Left ventricle myocardium inferior (tissue), 1 donor: ENCODE measurements at regions of chr6 and their contacts with region 1.

Region 1: DNA sequence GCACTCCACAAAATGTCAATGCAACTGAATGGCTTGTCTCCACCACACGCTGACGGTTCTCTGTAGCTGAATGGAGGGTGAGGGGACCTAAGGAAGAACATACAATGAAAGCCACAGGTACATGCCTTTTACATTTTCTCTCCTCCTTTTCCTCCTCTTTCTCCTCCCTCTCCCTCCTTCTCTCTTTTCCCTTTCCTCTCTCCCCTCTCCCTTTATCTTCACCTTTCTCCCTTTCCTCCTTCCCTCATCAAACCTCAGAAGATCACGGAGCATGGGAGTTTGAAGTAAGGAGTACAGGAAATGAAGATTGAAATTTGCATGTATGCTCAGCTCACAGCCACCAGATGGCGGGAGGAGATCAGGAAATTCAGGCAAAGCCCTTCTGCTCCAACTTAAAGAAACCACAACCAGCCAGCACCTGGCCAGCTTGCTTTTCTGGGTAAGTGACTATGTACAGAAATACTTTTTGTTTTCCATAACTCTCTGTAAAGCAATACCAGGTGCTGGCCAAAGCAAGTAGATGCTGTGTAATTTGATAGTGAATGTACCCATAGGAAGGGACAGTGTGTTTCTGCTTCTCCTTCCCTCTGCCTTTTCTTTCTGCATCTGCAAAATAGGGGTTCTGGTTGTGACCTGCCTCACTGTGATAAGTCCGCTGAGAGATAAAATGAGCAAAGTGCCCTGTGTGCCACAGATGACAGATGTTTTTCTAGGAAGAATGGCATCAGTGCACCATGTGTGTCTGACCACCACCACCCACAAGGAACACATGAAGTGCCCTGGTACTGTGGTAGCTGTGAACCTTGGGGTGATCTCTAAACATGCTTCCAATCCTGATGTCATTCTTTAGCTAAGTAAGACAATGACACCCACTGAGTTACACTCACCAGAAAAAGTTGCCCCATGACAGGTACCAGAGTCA is 18.6 kb upstream of the FOXO3 start:
- DNase-seq: peak; percentile 39
- H3K4me3 ChIP-seq: no peak overlapping the region
- H3K27ac ChIP-seq: no peak overlapping the region
- H3K4me1 ChIP-seq: peaks cover 9% of the 10 kb centered on the region
- H3K27me3 ChIP-seq: no peaks in the 10 kb centered on the region
- CTCF ChIP-seq: peak; percentile 87

Region 2: DNA sequence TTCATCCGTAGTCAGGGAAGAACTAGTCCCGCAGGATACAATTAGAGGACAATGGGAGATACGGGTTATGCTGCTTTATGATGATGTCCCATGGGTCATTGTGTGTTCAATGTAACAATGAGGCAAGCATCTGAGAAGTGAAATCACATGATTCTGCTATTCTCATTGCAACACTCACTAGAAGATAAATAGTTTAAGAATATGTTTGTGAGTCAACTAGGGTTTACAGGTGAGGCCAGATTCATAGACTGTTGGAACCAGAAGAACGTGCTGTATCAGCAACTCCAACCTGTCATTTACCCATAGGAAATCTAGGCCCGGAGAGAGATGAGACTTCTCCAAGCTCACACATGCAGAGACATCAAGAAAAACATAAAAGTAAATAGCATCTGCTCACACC is 798.8 kb before region 1 on chr6:
- intact Hi-C with region 1: no loop called
- DNase-seq: no peak
- H3K4me3 ChIP-seq: no peak overlapping the region
- H3K27ac ChIP-seq: no peak overlapping the region
- H3K4me1 ChIP-seq: no peaks in the 10 kb centered on the region
- H3K27me3 ChIP-seq: peaks cover 37% of the 10 kb centered on the region
- CTCF ChIP-seq: no peak

Region 3: DNA sequence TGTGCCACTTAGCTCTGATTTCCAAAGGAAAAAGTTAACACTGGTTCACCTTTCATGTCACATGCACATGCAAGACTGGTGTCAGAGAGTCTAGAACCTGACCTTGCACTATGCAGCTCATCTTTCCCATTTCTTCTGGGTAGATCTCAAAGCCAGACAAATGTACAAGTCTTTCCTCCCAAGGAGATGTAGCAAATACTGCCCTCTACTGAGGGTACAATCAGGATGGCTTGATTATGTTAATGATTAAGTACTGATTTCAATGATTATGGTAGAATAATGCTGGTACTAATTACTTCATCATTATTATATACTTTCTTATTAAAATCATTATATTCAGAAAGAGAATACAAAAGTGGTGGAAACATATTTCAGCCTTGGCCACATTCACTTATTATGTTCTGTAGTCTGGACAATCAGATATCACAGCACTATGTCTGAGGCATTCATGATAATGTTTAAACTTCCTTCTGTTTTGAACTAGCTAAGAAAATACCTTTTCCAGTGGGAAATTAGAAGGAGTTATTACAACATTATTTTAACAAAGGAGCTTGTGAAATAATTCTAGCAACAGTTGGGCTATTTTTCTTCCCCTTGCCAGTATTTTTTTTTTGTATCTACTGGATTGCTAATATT is 49.9 kb before region 1 on chr6:
- intact Hi-C with region 1: no loop called
- DNase-seq: no peak
- H3K4me3 ChIP-seq: no peak overlapping the region
- H3K27ac ChIP-seq: no peak overlapping the region
- H3K4me1 ChIP-seq: no peaks in the 10 kb centered on the region
- H3K27me3 ChIP-seq: no peaks in the 10 kb centered on the region
- CTCF ChIP-seq: peak; percentile 71

Region 4: GRCh38 chr6:108837236-108837971 is 295.3 kb after region 1 on chr6:
- intact Hi-C with region 1: loop called (anchors 2 kb)
- DNase-seq: no peak
- H3K4me3 ChIP-seq: no peak overlapping the region
- H3K27ac ChIP-seq: peak overlapping the region; percentile 1
- H3K4me1 ChIP-seq: peaks cover 9% of the 10 kb centered on the region
- H3K27me3 ChIP-seq: no peaks in the 10 kb centered on the region
- CTCF ChIP-seq: no peak

Region 5: GRCh38 chr6:108896111-108896661 is 354.1 kb after region 1 on chr6:
- intact Hi-C with region 1: loop called (anchors 2 kb)
- DNase-seq: no peak
- H3K4me3 ChIP-seq: no peak overlapping the region
- H3K27ac ChIP-seq: peak overlapping the region; percentile 79
- H3K4me1 ChIP-seq: peaks cover 47% of the 10 kb centered on the region
- H3K27me3 ChIP-seq: no peaks in the 10 kb centered on the region
- CTCF ChIP-seq: no peak

Region 6: DNA sequence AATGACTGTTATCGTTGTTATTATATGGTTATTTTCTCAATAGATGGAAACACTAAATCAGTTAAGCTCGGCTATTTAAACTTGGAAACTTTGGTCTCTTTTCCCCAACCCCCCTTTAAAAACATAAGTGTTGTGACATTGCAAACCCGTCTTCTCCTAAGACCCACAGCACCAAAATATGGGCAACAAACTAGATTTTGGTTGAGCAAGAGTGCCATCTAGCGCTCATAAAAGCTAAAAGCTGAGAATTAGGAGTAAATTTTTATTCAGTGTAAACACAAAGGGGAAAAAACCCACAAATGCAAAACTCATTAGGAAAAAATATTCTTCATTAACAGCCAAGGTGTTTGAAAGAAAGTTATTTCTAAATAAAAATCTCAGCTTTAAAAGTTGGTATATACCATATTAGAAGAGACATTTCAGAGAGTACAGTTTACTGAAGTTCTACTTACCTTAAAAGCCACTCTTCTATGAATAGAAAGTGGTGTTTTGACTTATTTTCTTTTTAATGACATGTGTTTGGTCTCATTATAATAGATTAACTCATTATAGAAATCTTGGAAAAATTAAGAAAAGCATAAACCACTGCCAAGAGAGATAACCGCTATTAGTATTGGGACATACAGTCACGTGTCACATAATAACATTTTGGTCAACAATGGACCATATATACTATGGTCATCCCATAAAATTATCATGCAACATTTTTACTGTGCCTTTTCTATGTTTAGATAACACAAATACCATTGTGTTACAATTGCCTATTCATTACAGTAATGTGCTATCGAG is 531.4 kb after region 1 on chr6:
- intact Hi-C with region 1: loop called (anchors 5 kb)
- DNase-seq: no peak
- H3K4me3 ChIP-seq: no peak overlapping the region
- H3K27ac ChIP-seq: peak overlapping the region; percentile 47
- H3K4me1 ChIP-seq: peaks cover 86% of the 10 kb centered on the region
- H3K27me3 ChIP-seq: no peaks in the 10 kb centered on the region
- CTCF ChIP-seq: peak; percentile 73